H1 (cell line): ENCODE measurements at regions of chr7 and their contacts with region 1.

Region 1: GRCh38 chr7:18666107-18666728 is 170.7 kb downstream of the HDAC9 start:
- DNase-seq: peak; percentile 23 to 88
- H3K4me3 ChIP-seq: no peak overlapping the region
- H3K27ac ChIP-seq: no peak overlapping the region
- H3K4me1 ChIP-seq: no peaks in the 10 kb centered on the region
- H3K27me3 ChIP-seq: no peaks in the 10 kb centered on the region
- CTCF ChIP-seq: peak; percentile 88 to 100 (median 99)
- EP300 ChIP-seq: no peak
- POLR2A ChIP-seq: no peak
- RAD21 ChIP-seq: peak; percentile 84 to 90

Region 2: GRCh38 chr7:18530224-18531179 is 135.7 kb before region 1 on chr7:
- CTCF ChIA-PET with region 1: no interaction called
- POLR2A ChIA-PET with region 1: no interaction called
- DNase-seq: no peak
- H3K4me3 ChIP-seq: no peak overlapping the region
- H3K27ac ChIP-seq: no peak overlapping the region
- H3K4me1 ChIP-seq: peaks cover 0 to under 1% (median 0%) of the 10 kb centered on the region in 4 experiments; a peak in 1 of 7 replicates
- H3K27me3 ChIP-seq: no peaks in the 10 kb centered on the region
- CTCF ChIP-seq: no peak
- EP300 ChIP-seq: no peak
- POLR2A ChIP-seq: no peak
- RAD21 ChIP-seq: no peak

Region 3: GRCh38 chr7:18653381-18654155 is 12.7 kb before region 1 on chr7:
- CTCF ChIA-PET with region 1: interaction called, 15 read pairs
- POLR2A ChIA-PET with region 1: no interaction called
- DNase-seq: no peak
- H3K4me3 ChIP-seq: no peak overlapping the region
- H3K27ac ChIP-seq: no peak overlapping the region
- H3K4me1 ChIP-seq: no peaks in the 10 kb centered on the region
- H3K27me3 ChIP-seq: no peaks in the 10 kb centered on the region
- CTCF ChIP-seq: no peak
- EP300 ChIP-seq: no peak
- POLR2A ChIP-seq: no peak
- RAD21 ChIP-seq: no peak

Region 4: DNA sequence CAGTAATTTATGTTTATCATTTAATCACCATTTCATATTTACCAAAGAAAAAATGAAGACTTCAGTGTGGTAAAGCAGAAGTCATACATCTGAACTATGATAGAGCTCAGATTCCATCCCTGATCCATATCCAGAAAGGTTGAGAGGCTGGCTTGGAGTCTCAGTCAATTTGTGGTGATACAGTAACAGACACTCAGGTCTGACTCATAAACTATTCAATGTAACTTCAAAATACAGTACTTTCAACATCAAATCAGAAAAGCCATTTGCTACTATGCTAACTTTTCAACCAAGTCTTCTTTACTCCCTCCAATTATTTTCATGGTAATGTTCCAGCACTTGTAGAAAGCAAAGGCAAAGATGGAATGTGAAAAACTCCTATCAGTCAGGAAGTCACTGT is 19.8 kb after region 1 on chr7:
- CTCF ChIA-PET with region 1: interaction called, 10 read pairs
- POLR2A ChIA-PET with region 1: no interaction called
- DNase-seq: no peak
- H3K4me3 ChIP-seq: no peak overlapping the region
- H3K27ac ChIP-seq: no peak overlapping the region
- H3K4me1 ChIP-seq: no peaks in the 10 kb centered on the region; a peak in 1 of 7 replicates
- H3K27me3 ChIP-seq: peaks cover 0 to 1% (median 0%) of the 10 kb centered on the region in 4 experiments; a peak in 1 of 7 replicates
- CTCF ChIP-seq: no peak
- EP300 ChIP-seq: no peak
- POLR2A ChIP-seq: no peak
- RAD21 ChIP-seq: no peak

Region 5: GRCh38 chr7:18727115-18727870 is 61.1 kb after region 1 on chr7:
- CTCF ChIA-PET with region 1: no interaction called
- POLR2A ChIA-PET with region 1: no interaction called
- DNase-seq: no peak
- H3K4me3 ChIP-seq: no peak overlapping the region
- H3K27ac ChIP-seq: no peak overlapping the region
- H3K4me1 ChIP-seq: no peaks in the 10 kb centered on the region
- H3K27me3 ChIP-seq: no peaks in the 10 kb centered on the region
- CTCF ChIP-seq: no peak
- EP300 ChIP-seq: no peak
- POLR2A ChIP-seq: no peak
- RAD21 ChIP-seq: no peak